ENCODE measurements at regions of chr2 and their contacts with region 1.

Region 1: DNA sequence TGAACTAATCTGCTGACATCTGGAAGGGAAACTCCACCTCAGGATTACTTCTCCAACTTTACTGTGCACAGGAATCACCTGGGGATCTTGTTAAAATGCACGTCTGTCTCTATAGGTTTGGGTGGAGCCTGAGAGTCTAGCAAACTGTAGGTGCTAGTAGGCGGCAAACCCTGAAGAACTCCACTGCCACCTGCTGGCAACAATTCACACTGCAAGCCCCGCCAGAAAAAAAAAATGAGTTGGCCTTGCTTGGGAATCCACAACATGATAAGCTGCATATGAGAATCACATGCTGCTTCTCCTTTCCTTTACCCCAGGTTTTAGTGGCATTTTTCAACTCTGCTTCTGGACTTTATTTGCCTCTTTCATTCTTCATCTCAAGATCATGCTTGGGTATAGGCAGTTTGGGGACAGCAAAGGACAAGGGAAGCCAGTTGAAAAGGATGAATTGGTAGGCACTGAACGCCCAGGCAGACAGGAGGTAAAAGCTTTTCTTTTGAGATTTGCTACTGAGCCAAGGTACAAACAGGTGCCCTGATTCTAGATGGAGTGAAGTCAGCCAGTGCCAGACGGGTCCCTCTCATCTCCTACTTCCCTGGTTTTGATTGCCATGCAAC is 88.8 kb downstream of the VIT start:
- DNase-seq: peak; percentile 73
- H3K4me3 Mint-ChIP-seq: no peak overlapping the region
- H3K27ac Mint-ChIP-seq: no peak overlapping the region
- H3K4me1 Mint-ChIP-seq: no peaks in the 10 kb centered on the region
- H3K27me3 Mint-ChIP-seq: peaks cover 32% of the 10 kb centered on the region
- CTCF ChIP-seq: peak; percentile 82

Region 2: GRCh38 chr2:35946478-35946877 is 838.8 kb before region 1 on chr2:
- CTCF ChIA-PET with region 1: no interaction called
- POLR2A ChIA-PET with region 1: no interaction called
- intact Hi-C with region 1: no loop called
- DNase-seq: no peak
- H3K4me3 Mint-ChIP-seq: no peak overlapping the region
- H3K27ac Mint-ChIP-seq: no peak overlapping the region
- H3K4me1 Mint-ChIP-seq: no peaks in the 10 kb centered on the region
- H3K27me3 Mint-ChIP-seq: peaks cover 81% of the 10 kb centered on the region
- CTCF ChIP-seq: no peak

Region 3: GRCh38 chr2:36578343-36579280 is 206.7 kb before region 1 on chr2:
- CTCF ChIA-PET with region 1: no interaction called
- POLR2A ChIA-PET with region 1: no interaction called
- intact Hi-C with region 1: no loop called
- DNase-seq: peak; percentile 42
- H3K4me3 Mint-ChIP-seq: no peak overlapping the region
- H3K27ac Mint-ChIP-seq: peak overlapping the region; percentile 76
- H3K4me1 Mint-ChIP-seq: peaks cover 10% of the 10 kb centered on the region
- H3K27me3 Mint-ChIP-seq: no peaks in the 10 kb centered on the region
- CTCF ChIP-seq: no peak

Region 4: GRCh38 chr2:36633470-36634092 is 151.7 kb before region 1 on chr2:
- CTCF ChIA-PET with region 1: no interaction called
- POLR2A ChIA-PET with region 1: no interaction called
- intact Hi-C with region 1: no loop called
- DNase-seq: no peak
- H3K4me3 Mint-ChIP-seq: no peak overlapping the region
- H3K27ac Mint-ChIP-seq: no peak overlapping the region
- H3K4me1 Mint-ChIP-seq: peaks cover 5% of the 10 kb centered on the region
- H3K27me3 Mint-ChIP-seq: no peaks in the 10 kb centered on the region
- CTCF ChIP-seq: no peak

Region 5: DNA sequence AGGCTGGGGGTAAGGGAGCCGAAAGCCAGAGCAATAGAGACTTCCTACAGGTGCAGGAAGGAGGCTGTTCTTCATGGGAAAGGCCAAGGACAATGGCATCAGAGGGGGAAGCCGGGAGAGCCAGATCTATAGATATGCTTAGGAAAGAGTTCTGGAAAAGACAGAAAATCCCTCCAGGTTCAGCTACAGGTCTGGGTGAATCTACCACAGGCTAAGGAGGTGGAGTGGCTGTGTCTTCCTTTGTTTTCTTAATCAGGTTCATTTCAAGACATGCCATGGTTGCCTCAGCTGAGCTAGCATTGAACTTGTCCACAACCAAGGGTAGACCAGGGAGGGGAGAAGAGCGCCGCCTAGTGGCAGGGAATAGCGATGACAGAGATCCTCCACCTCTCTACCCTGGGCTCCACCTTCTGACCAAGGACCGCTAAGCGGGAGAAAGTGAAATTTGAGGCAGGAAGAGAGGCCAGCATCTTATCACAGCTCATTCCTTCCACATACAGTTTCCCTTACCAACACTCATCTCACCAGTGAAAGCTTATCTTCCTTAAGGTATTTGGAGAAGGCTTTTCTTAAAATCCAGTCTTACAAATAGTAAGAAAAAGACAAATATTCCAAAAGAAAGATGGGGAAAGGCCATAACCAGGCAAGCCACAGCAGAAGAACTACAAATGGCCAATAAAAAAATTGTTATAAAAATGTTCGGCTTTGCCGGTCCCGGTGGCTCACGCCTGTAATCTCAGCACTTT is 14.6 kb before region 1 on chr2:
- CTCF ChIA-PET with region 1: interaction called, 32 read pairs
- POLR2A ChIA-PET with region 1: interaction called, 3 read pairs
- intact Hi-C with region 1: no loop called
- DNase-seq: peak; percentile 69
- H3K4me3 Mint-ChIP-seq: no peak overlapping the region
- H3K27ac Mint-ChIP-seq: no peak overlapping the region
- H3K4me1 Mint-ChIP-seq: no peaks in the 10 kb centered on the region
- H3K27me3 Mint-ChIP-seq: no peaks in the 10 kb centered on the region
- CTCF ChIP-seq: peak; percentile 60

Region 6: GRCh38 chr2:36812196-36812595 is 26.9 kb after region 1 on chr2:
- CTCF ChIA-PET with region 1: interaction called, 18 read pairs
- POLR2A ChIA-PET with region 1: no interaction called
- intact Hi-C with region 1: no loop called
- DNase-seq: peak; percentile 12
- H3K4me3 Mint-ChIP-seq: no peak overlapping the region
- H3K27ac Mint-ChIP-seq: no peak overlapping the region
- H3K4me1 Mint-ChIP-seq: no peaks in the 10 kb centered on the region
- H3K27me3 Mint-ChIP-seq: peaks cover 5% of the 10 kb centered on the region
- CTCF ChIP-seq: no peak

Region 7: DNA sequence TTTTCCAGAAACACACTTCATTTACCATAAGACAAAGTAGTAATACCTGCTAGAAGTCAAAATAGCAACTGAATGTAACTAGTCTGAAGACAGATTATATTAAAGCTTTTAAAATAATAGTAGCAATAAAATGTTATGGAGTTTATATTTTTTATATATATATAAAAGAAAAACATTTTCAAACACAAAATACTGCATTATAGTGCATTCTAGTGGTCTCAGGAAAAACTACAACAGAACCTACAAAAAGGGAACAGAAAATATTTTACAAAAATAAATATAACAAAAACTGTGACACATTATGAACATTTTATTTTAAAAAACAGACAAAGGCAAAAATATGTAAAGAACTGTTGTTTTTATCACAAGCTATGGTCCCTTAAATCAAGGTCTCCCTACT is 133.0 kb after region 1 on chr2:
- CTCF ChIA-PET with region 1: interaction called, 9 read pairs
- POLR2A ChIA-PET with region 1: no interaction called
- intact Hi-C with region 1: loop called (anchors 1 kb)
- DNase-seq: no peak
- H3K4me3 Mint-ChIP-seq: no peak overlapping the region
- H3K27ac Mint-ChIP-seq: no peak overlapping the region
- H3K4me1 Mint-ChIP-seq: peaks cover 7% of the 10 kb centered on the region
- H3K27me3 Mint-ChIP-seq: no peaks in the 10 kb centered on the region
- CTCF ChIP-seq: peak; percentile 21

Region 8: DNA sequence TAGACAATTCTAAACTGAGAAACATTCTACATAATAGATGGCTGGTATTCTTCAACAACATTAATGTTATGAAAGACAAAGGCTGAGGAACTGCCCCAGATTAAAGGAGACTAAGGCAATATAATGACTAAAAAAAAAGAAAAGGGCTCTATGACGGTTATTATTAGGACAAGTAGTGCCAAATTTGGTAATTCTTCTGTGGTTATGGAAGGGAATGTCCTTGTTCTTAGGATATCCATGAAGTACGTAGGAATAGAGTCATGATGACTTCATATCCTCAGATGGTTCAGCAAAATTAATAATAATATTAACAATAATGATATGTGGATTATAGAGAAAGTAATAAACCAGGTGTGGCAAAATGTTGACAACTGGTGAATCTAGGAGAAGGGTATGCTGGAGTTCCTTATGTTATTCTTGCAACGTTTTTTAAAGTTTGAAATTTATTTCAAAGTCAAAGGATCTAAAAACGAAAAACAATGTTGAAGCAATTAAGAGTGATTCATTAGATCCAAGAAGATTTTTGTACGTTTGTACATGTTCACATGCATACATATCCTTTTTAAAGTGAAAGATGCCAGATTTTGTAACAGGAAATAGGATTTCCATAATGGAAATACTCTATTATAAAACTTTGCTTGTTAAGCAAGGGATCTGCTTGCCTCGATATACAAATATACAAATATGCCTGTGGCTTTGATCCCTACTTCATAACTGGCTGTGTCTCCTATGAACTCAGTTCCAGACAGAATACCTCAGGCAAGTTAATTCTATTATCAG is 208.7 kb after region 1 on chr2:
- CTCF ChIA-PET with region 1: no interaction called
- POLR2A ChIA-PET with region 1: no interaction called
- intact Hi-C with region 1: no loop called
- DNase-seq: no peak
- H3K4me3 Mint-ChIP-seq: no peak overlapping the region
- H3K27ac Mint-ChIP-seq: no peak overlapping the region
- H3K4me1 Mint-ChIP-seq: no peaks in the 10 kb centered on the region
- H3K27me3 Mint-ChIP-seq: no peaks in the 10 kb centered on the region
- CTCF ChIP-seq: no peak